GM12878 (cell line): ENCODE measurements at regions of chrX and their contacts with region 1.

Region 1: GRCh38 chrX:40468033-40468846 is 112.5 kb upstream of the ATP6AP2 start:
- DNase-seq: peak; percentile 47
- ATAC-seq: peak; percentile 93
- H3K4me3 ChIP-seq: no peak overlapping the region
- H3K27ac ChIP-seq: no peak overlapping the region
- H3K4me1 ChIP-seq: peaks cover under 1% of the 10 kb centered on the region; the same call in 1 of the 2 replicates
- H3K27me3 ChIP-seq: no peaks in the 10 kb centered on the region
- CTCF ChIP-seq: peak; percentile 40 to 60 (median 42); a peak in 4 of 6 replicates
- EP300 ChIP-seq: no peak
- POLR2A ChIP-seq: no peak
- RAD21 ChIP-seq: peak; percentile 68

Region 2: DNA sequence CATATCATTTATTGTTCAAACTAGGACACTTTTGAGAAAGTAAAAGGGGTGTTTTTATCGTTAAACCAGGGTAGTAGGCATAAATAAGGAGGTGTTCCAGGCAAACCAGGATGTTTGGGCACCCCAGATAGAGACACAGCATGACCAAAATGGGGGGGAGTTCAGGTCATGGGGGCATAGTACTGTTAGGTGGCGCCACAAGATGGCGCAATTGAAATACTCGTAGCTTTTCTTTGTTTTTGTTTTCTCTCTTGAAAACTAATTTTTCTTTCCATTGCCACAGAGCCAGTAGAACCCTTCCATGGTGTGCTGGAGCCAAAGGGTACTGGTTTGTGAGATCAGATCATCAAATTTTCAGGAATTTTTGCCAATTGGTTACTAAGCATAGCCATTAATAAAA is 653.8 kb before region 1 on chrX:
- CTCF ChIA-PET with region 1: interaction called, 19 read pairs
- POLR2A ChIA-PET with region 1: no interaction called
- RAD21 ChIA-PET with region 1: interaction called, 8 read pairs
- SMC1A ChIA-PET with region 1: interaction called, 4 read pairs
- in situ Hi-C with region 1: no loop called
- intact Hi-C with region 1: loop called (anchors 10 kb)
- DNase-seq: no peak
- ATAC-seq: peak; percentile 62
- H3K4me3 ChIP-seq: no peak overlapping the region
- H3K27ac ChIP-seq: no peak overlapping the region
- H3K4me1 ChIP-seq: peaks cover 18% of the 10 kb centered on the region
- H3K27me3 ChIP-seq: no peaks in the 10 kb centered on the region; a peak in 2 of 4 replicates
- CTCF ChIP-seq: peak; percentile 47 to 64 (median 58); a peak in 5 of 6 replicates
- EP300 ChIP-seq: no peak
- POLR2A ChIP-seq: no peak
- RAD21 ChIP-seq: peak; percentile 65

Region 3: GRCh38 chrX:40175511-40176350 is 292.5 kb before region 1 on chrX:
- CTCF ChIA-PET with region 1: no interaction called
- POLR2A ChIA-PET with region 1: no interaction called
- RAD21 ChIA-PET with region 1: no interaction called
- SMC1A ChIA-PET with region 1: no interaction called
- in situ Hi-C with region 1: no loop called
- intact Hi-C with region 1: loop called (anchors 1 kb)
- DNase-seq: no peak
- ATAC-seq: peak; percentile 50
- H3K4me3 ChIP-seq: peak overlapping the region; percentile 61
- H3K27ac ChIP-seq: peak overlapping the region; percentile 96
- H3K4me1 ChIP-seq: 0 out of 2 replicates have a peak, but pooled peaks cover 9% of the 10 kb centered on the region
- H3K27me3 ChIP-seq: no peaks in the 10 kb centered on the region
- CTCF ChIP-seq: no peak
- EP300 ChIP-seq: 0 out of 4 replicates have a peak, but pooled peaks of 1 of the 2 experiments have one; percentile 9
- POLR2A ChIP-seq: peak; percentile 85
- RAD21 ChIP-seq: no peak

Region 4: DNA sequence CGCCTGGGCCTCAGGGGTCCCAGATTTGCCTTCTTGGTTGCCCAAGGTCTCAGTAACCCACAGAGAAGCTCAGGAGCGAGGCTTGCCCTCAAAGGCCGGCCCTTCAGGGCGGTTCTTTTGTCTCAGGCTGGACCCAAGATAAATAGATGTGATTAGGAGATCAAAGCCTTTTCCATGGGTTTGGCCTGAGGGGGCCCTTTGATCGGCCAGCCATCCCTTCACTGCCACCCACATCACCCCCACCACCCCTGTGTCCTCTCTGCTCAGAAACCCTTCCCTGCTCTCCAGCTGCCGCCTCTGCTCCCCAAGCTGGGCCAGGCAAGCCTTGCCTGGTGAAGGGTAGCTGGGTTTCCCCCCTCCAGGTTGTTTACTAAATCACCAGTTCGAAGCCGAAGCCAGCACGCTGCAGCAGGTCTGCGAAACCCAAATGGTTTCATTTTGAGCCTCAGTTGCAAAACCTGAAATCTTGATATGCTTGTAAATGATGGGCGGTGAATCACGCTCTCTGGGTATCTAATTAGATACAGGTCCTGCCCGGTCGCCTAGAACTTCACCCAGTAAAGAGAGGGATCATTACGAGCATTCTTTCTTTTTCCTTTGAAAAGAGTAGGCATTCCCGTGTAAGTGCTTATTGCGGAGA is 167.8 kb before region 1 on chrX:
- CTCF ChIA-PET with region 1: no interaction called
- POLR2A ChIA-PET with region 1: no interaction called
- RAD21 ChIA-PET with region 1: no interaction called
- SMC1A ChIA-PET with region 1: no interaction called
- in situ Hi-C with region 1: no loop called
- intact Hi-C with region 1: loop called (anchors 2 kb)
- DNase-seq: no peak
- ATAC-seq: peak; percentile 79
- H3K4me3 ChIP-seq: no peak overlapping the region
- H3K27ac ChIP-seq: peak overlapping the region; percentile 38; the same call in 1 of the 2 replicates
- H3K4me1 ChIP-seq: peaks cover 16% of the 10 kb centered on the region
- H3K27me3 ChIP-seq: no peaks in the 10 kb centered on the region
- CTCF ChIP-seq: no peak
- EP300 ChIP-seq: no peak
- POLR2A ChIP-seq: no peak
- RAD21 ChIP-seq: no peak

Region 5: GRCh38 chrX:40420899-40421729 is 47.1 kb before region 1 on chrX:
- CTCF ChIA-PET with region 1: no interaction called
- POLR2A ChIA-PET with region 1: no interaction called
- RAD21 ChIA-PET with region 1: no interaction called
- SMC1A ChIA-PET with region 1: no interaction called
- in situ Hi-C with region 1: no loop called
- intact Hi-C with region 1: loop called (anchors 1 kb)
- DNase-seq: peak; percentile 63
- ATAC-seq: peak; percentile 87
- H3K4me3 ChIP-seq: no peak overlapping the region
- H3K27ac ChIP-seq: peak overlapping the region; percentile 63
- H3K4me1 ChIP-seq: no peaks in the 10 kb centered on the region; the same call in 1 of the 2 replicates
- H3K27me3 ChIP-seq: no peaks in the 10 kb centered on the region; a peak in 1 of 4 replicates
- CTCF ChIP-seq: no peak
- EP300 ChIP-seq: no peak
- POLR2A ChIP-seq: no peak
- RAD21 ChIP-seq: no peak